ENCODE measurements at regions of chr3 and their contacts with region 1.

Region 1: DNA sequence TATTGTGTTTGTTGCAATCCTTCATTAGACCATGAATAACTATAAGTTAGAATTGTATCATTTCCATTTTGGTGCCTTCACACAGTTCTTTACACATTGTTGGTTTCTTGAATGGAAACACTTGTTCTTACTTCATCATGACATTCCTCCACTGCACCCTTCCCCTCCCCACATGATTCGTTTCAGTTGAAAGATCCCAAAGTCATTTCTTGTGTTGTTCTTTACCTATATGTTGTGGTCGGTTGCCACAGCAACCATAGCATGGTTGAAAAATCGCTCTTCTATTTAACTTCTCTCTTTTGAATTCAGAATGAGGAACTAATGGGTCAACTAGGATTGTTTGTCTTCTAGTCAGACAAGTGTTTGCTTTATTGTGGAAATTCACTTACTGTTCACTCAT is 103.3 kb downstream of the IL1RAP start:
- DNase-seq: peak; percentile 72
- ATAC-seq: peak; percentile 31
- H3K4me3 Mint-ChIP-seq: no peak overlapping the region
- H3K27ac Mint-ChIP-seq: peak overlapping the region; percentile 86
- H3K4me1 Mint-ChIP-seq: peaks cover 63% of the 10 kb centered on the region
- H3K27me3 Mint-ChIP-seq: no peaks in the 10 kb centered on the region
- CTCF ChIP-seq: no peak

Region 2: DNA sequence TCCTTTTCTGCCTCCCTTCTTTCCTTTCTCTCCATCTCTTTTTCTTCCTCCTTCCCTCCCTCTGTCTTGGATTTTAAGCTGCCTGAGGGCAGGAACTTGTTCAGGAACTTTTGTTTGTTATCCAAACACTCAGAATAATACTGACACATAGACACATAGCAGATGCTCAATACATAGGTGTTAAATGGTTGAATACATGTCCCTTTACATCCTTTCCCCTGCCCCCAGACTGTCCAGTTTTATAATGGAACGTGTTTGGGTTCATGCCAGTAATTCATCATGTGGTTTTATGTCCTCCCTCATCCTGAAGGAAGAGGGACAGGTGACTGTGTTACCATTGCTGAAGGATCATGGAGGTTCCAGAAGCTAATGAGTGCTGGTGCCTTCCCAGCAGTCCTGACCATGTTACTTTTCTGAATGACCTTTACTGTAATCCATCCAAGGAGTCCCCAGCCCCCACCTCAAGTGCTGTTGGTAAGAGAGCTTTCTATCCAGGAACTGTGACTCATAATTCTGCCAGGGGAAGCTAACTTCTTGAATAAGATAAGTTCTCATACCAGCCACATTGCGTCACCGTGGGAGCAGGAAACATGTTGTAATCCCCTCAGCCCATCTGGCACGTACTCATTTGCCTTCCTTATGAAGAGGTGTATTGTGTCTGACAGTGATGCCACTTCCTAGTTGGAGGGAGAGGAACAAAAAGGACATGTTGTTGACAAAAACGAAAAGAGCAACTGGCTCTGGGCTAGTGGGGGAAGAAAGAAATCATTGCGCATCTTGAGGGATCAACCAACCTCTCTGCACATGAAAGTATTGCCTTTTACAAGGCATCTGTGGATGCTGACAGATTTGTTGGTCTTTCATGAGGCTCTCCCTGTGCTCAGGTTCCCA is 50.9 kb before region 1 on chr3:
- CTCF ChIA-PET with region 1: interaction called, 5 read pairs
- POLR2A ChIA-PET with region 1: interaction called, 3 read pairs
- intact Hi-C with region 1: loop called (anchors 1 kb)
- DNase-seq: peak; percentile 95
- ATAC-seq: peak; percentile 90
- H3K4me3 Mint-ChIP-seq: no peak overlapping the region
- H3K27ac Mint-ChIP-seq: peak overlapping the region; percentile 88
- H3K4me1 Mint-ChIP-seq: peaks cover 71% of the 10 kb centered on the region
- H3K27me3 Mint-ChIP-seq: no peaks in the 10 kb centered on the region
- CTCF ChIP-seq: no peak